ENCODE measurements at regions of chr5 and their contacts with region 1.

Region 1: GRCh38 chr5:113320273-113320780 is 114.5 kb downstream of the TSSK1B start:
- DNase-seq: no peak
- H3K27ac ChIP-seq: no peak overlapping the region
- CTCF ChIP-seq: no peak

Region 2: DNA sequence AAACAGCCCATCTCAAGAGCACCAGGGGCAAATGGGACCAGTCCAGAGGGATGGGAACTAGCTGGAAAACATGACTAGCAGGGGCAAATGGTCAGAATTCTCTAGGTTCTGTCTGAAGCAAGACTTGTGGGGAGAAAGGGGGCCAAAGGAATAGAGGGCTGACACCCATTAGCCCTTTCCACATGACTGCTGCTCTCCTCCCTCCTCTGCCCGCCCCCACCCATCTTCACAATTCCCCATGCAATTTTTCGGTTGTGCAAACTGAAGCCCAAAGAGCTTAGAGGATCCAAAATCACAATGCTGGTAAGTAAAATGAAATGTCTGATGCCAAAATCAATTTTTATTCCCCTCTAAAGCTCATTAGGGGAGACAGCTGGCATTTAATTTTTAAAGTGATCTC is 136.6 kb before region 1 on chr5:
- CTCF ChIA-PET with region 1: no interaction called
- POLR2A ChIA-PET with region 1: interaction called, 17 read pairs
- DNase-seq: no peak
- H3K27ac ChIP-seq: no peak overlapping the region
- CTCF ChIP-seq: no peak